ENCODE measurements at regions of chr3 and their contacts with region 1.

Region 1: DNA sequence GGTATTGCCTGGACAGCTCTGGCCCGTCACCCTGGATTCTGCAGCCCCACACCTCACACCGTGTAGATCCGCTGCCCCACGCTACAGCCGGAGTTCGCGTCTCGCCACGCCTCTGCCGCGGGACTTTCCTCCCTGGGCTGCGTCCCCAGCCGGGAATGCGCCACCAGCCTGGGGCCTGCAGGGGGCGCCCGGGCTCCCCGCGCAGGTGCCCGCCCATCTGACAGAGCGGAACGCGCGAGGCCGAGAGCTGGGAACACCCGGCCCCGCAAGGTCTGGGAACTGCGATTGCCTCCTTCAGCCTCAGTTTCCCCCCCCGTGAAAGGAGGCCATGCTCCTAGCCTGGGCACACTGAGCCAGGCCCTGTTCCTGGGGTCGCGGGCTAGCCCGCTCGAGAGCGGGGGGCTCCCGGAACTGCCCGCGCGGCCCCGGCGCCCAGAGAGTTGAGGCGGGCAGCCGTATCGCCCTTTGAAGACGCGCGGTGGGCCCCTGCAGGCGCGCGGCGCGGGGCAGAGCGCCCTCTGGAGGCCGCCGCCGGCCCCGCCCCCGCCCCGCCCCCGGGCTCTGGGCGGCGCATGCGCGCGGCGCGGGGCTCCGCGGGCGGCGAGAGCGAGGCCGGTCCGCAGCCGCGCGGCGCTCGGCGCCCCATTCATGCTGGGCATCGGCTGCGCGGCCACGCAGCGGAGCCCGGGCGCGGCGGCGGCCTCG is at the start of gene PLXNA1:
- DNase-seq: peak; percentile 64
- ATAC-seq: peak; percentile 85
- H3K4me3 ChIP-seq: peak within 1 kb of the TSS; percentile 67 to 74
- H3K27ac ChIP-seq: peak within 1 kb of the TSS; percentile 67; the same call in 1 of the 2 replicates
- H3K4me1 ChIP-seq: peaks cover 2 to 19% of the 10 kb centered on the region in 2 experiments; a peak in 3 of 4 replicates
- H3K27me3 ChIP-seq: no peaks in the 10 kb centered on the region
- CTCF ChIP-seq: peak; percentile 81 to 97 (median 91)
- POLR2A ChIP-seq: peak; percentile 48
- RAD21 ChIP-seq: peak; percentile 66
- total RNA-seq, gene PLXNA1: 30.3 TPM

Region 2: DNA sequence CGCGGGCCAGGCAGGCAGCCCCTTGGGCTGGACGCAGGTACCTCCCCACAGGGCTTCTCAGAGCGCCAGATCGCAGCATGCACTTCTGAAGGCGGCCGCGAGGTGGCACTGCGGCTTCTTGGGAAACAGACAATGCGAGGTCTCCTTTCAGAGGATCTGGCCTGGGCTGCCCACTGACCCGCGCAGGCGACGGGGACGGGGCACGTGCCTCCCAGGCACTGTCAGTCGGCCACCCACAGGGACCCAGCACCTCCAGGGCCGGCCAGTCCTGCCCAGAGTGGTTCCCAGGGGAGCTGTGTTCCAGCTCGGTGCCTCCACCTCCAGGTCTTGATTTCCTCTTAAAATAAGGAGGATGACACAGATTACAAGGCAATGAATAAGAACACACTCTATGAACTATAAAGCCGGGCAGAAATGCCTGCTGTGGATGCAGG is 303.3 kb before region 1 on chr3:
- CTCF ChIA-PET with region 1: interaction called, 4 read pairs
- POLR2A ChIA-PET with region 1: no interaction called
- RAD21 ChIA-PET with region 1: no interaction called
- intact Hi-C with region 1: loop called (anchors 1 kb)
- DNase-seq: peak; percentile 68
- ATAC-seq: peak; percentile 99
- H3K4me3 ChIP-seq: no peak overlapping the region
- H3K27ac ChIP-seq: no peak overlapping the region
- H3K4me1 ChIP-seq: peaks cover 0 to 8% of the 10 kb centered on the region in 2 experiments; a peak in 1 of 4 replicates
- H3K27me3 ChIP-seq: no peaks in the 10 kb centered on the region
- CTCF ChIP-seq: peak; percentile 90 to 91 (median 90)
- POLR2A ChIP-seq: no peak
- RAD21 ChIP-seq: peak; percentile 93

Region 3: GRCh38 chr3:127151992-127152650 is 169.5 kb after region 1 on chr3:
- CTCF ChIA-PET with region 1: no interaction called
- POLR2A ChIA-PET with region 1: no interaction called
- RAD21 ChIA-PET with region 1: no interaction called
- intact Hi-C with region 1: no loop called
- DNase-seq: no peak
- ATAC-seq: no peak
- H3K4me3 ChIP-seq: no peak overlapping the region
- H3K27ac ChIP-seq: no peak overlapping the region
- H3K4me1 ChIP-seq: no peaks in the 10 kb centered on the region
- H3K27me3 ChIP-seq: peaks cover 17% of the 10 kb centered on the region; the same call in 1 of the 2 replicates
- CTCF ChIP-seq: no peak
- POLR2A ChIP-seq: no peak
- RAD21 ChIP-seq: no peak

Region 4: GRCh38 chr3:127196466-127197299 is 214.1 kb after region 1 on chr3:
- CTCF ChIA-PET with region 1: no interaction called
- POLR2A ChIA-PET with region 1: no interaction called
- RAD21 ChIA-PET with region 1: no interaction called
- intact Hi-C with region 1: no loop called
- DNase-seq: no peak
- ATAC-seq: no peak
- H3K4me3 ChIP-seq: no peak overlapping the region
- H3K27ac ChIP-seq: no peak overlapping the region
- H3K4me1 ChIP-seq: no peaks in the 10 kb centered on the region
- H3K27me3 ChIP-seq: no peaks in the 10 kb centered on the region
- CTCF ChIP-seq: no peak
- POLR2A ChIP-seq: no peak
- RAD21 ChIP-seq: no peak

Region 5: GRCh38 chr3:127304121-127304744 is 321.6 kb after region 1 on chr3:
- CTCF ChIA-PET with region 1: no interaction called
- POLR2A ChIA-PET with region 1: no interaction called
- RAD21 ChIA-PET with region 1: no interaction called
- intact Hi-C with region 1: loop called (anchors 5 kb)
- DNase-seq: peak; percentile 92
- ATAC-seq: peak; percentile 97
- H3K4me3 ChIP-seq: peak overlapping the region; percentile 3 to 43
- H3K27ac ChIP-seq: peak overlapping the region; percentile 31; the same call in 1 of the 2 replicates
- H3K4me1 ChIP-seq: peaks cover 10 to 16% of the 10 kb centered on the region in 2 experiments
- H3K27me3 ChIP-seq: no peaks in the 10 kb centered on the region
- CTCF ChIP-seq: peak; percentile 28 to 45 (median 35); a peak in 4 of 6 replicates
- POLR2A ChIP-seq: no peak
- RAD21 ChIP-seq: peak; percentile 45